Heart left ventricle (tissue), 16 donors: ENCODE measurements at regions of chr21 and their contacts with region 1.

Region 1: DNA sequence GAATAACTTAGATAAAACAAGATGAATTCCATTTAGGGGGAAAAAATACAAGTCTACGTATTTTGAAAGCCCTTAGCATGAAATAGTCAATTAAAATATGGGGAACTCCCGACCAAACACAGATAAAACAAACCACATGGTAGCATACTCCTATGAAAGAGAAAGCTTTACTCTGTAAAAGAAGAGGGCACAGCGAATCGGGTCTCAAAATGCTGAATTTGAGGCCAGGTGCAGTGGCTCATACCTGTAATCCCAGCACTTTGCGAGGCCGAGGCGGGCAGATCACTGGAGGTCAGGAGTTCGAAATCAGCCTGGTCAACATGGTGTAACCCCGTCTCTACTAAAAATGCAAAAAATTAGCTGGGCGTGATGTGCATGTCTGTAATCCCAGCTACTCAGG is 116.9 kb upstream of the TIAM1 start:
- DNase-seq: no peak
- ATAC-seq: no peak
- H3K4me3 ChIP-seq: no peak overlapping the region
- H3K27ac ChIP-seq: no peak overlapping the region
- H3K4me1 ChIP-seq: no peaks in the 10 kb centered on the region
- H3K27me3 ChIP-seq: no peaks in the 10 kb centered on the region
- CTCF ChIP-seq: no peak
- POLR2A ChIP-seq: no peak

Region 2: GRCh38 chr21:31409831-31410487 is 51.0 kb before region 1 on chr21:
- intact Hi-C with region 1: loop called in 1 of 10 experiments (anchors 10 kb)
- DNase-seq: no peak
- ATAC-seq: peak; percentile 45 to 69 (median 52)
- H3K4me3 ChIP-seq: no peak overlapping the region
- H3K27ac ChIP-seq: peak overlapping the region in 6 of 12 donors; percentile 14 to 57 (median 33)
- H3K4me1 ChIP-seq: peaks cover 0 to 16% (median 0%) of the 10 kb centered on the region in 12 donors
- H3K27me3 ChIP-seq: no peaks in the 10 kb centered on the region
- CTCF ChIP-seq: no peak
- POLR2A ChIP-seq: no peak

Region 3: DNA sequence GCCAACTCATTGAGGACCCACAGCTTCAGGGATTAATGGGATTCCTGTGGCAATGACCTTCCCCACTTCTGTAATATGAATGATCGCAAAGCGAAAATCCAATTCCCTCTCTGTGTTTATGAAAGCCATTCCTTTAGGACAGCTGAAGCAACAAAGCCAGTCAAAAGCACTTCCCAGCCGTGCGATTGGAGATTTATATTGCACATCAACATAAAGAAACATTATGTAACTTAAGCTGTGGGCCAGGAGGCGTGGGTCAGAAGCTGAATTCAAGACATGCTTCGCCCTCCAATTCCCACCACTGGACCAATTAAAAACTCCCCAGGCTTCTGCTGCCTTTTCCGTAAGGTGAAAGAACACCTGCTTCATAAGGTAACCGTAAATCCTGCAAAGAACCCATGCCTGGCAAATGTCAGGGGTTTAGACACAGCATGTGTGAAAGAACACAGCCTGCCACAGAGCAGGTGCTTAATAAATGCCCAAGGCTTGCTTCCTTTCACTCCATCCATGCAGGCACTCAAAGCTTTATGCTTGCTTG is 59.6 kb after region 1 on chr21:
- intact Hi-C with region 1: loop called in 1 of 10 experiments (anchors 10 kb)
- DNase-seq: no peak
- ATAC-seq: no peak
- H3K4me3 ChIP-seq: no peak overlapping the region
- H3K27ac ChIP-seq: no peak overlapping the region
- H3K4me1 ChIP-seq: no peaks in the 10 kb centered on the region
- H3K27me3 ChIP-seq: no peaks in the 10 kb centered on the region
- CTCF ChIP-seq: no peak
- POLR2A ChIP-seq: no peak

Region 4: GRCh38 chr21:31707499-31707898 is 246.5 kb after region 1 on chr21:
- intact Hi-C with region 1: no loop called
- DNase-seq: no peak
- ATAC-seq: no peak
- H3K4me3 ChIP-seq: no peak overlapping the region
- H3K27ac ChIP-seq: no peak overlapping the region
- H3K4me1 ChIP-seq: peaks cover 0 to 43% (median 22%) of the 10 kb centered on the region in 12 donors
- H3K27me3 ChIP-seq: no peaks in the 10 kb centered on the region
- CTCF ChIP-seq: no peak
- POLR2A ChIP-seq: no peak